Endothelial cell of umbilical vein (primary cell): ENCODE measurements at regions of chr4 and their contacts with region 1.

Region 1: DNA sequence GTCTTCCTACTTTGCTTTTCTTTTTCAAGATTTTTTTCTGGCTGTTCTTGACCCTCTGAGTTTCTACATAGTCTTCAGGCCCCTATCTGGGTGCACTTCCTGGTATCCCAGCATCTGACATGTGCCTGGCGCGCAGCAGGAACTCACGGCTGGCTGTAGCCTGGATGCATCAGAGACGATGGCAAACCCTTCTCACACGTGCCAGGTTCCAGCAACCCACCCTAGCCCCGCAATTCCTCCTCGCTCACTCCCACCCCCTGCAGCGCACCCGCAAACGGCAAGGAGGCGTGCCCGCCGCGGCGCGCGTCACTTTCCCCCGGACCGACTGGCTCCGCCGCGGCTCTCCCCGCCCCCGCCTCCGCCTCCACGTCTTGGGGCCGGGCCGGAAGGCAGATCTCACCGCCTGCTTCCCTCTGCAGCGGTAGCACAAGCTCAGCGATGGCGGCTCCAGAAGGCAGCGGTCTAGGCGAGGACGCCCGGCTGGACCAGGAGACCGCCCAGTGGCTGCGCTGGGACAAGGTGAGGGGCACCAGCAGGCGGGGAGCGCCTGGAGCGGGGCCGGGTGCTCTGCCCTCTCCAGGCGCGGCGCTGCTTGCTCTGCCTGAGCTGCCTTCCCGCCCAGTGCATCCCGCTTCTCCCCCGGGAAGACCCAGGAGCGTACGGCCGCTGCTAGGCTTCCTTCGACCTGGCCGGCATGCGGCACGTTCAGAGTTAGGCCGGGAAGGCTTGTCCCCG is at the start of gene PGM2:
- DNase-seq: peak; percentile 91
- H3K4me3 ChIP-seq: peak within 1 kb of the TSS; percentile 45 to 96 (median 95)
- H3K27ac ChIP-seq: peak within 1 kb of the TSS; percentile 56
- H3K4me1 ChIP-seq: peaks cover 19% of the 10 kb centered on the region
- H3K27me3 ChIP-seq: no peaks in the 10 kb centered on the region
- CTCF ChIP-seq: peak in 1 of 2 donors; percentile 16
- POLR2A ChIP-seq: peak; percentile 87
- total RNA-seq, gene PGM2: 45.8 and 53.9 TPM in 2 replicates

Region 2: GRCh38 chr4:37837446-37837845 is 11.0 kb after region 1 on chr4:
- CTCF ChIA-PET with region 1: interaction called, 21 read pairs
- POLR2A ChIA-PET with region 1: interaction called, 14 read pairs
- dilution Hi-C with region 1: no loop called
- intact Hi-C with region 1: loop called (anchors 1 kb)
- DNase-seq: peak; percentile 90
- H3K4me3 ChIP-seq: peak overlapping the region in 1 of 3 experiments; percentile 4
- H3K27ac ChIP-seq: peak overlapping the region; percentile 87
- H3K4me1 ChIP-seq: peaks cover 37% of the 10 kb centered on the region
- H3K27me3 ChIP-seq: no peaks in the 10 kb centered on the region
- CTCF ChIP-seq: no peak
- POLR2A ChIP-seq: peak; percentile 20

Region 3: DNA sequence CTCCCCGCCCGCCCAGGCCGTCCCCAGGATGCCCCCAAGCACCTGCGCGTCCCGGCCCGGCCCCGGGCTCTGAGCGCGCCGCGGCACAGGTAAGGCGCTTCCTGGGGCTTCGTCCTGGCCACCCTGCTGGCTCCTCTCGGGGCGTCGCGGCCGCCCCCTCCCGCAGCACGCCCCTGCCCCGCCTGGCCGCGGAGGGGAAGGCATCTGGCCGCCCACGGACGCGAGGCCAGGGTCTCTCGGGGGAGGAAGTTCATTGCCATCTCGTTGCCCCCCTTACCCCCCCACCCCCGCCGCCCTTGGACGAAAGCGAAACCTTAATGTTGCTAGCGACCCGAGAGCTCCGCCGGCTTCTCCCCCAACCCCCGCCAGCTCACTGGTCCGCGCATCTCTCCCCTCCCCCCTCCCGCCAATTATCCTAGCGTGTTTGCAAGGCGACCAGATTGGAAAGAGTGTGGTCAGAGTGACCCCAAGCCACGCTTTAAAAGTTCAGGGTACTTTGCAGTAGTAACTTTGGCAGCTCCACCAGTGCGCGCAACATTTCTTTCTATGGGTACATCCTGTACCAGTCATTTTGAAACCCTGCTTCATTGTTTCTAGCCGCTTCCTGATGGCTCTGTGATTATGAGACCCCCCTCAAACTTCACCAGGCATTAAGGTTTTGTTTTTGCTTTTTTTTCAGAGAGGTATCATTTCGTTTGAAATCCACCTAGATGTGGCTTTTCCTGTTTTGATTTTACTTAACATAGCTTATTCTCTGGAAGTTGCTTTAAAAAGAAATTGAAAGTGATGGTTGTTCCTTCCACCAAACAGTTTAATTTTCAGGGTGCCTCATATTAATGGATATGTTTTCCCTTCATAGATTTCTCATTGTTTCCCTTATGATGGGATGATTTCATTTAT is 65.0 kb after region 1 on chr4:
- CTCF ChIA-PET with region 1: interaction called, 3 read pairs
- POLR2A ChIA-PET with region 1: no interaction called
- dilution Hi-C with region 1: no loop called
- intact Hi-C with region 1: loop called (anchors 2 kb)
- DNase-seq: peak; percentile 17
- H3K4me3 ChIP-seq: peak overlapping the region; percentile 44 to 64 (median 48)
- H3K27ac ChIP-seq: no peak overlapping the region
- H3K4me1 ChIP-seq: peaks cover 7% of the 10 kb centered on the region
- H3K27me3 ChIP-seq: peaks cover 30 to 35% of the 10 kb centered on the region in 2 experiments
- CTCF ChIP-seq: peak in 1 of 2 donors; percentile 15
- POLR2A ChIP-seq: no peak

Region 4: DNA sequence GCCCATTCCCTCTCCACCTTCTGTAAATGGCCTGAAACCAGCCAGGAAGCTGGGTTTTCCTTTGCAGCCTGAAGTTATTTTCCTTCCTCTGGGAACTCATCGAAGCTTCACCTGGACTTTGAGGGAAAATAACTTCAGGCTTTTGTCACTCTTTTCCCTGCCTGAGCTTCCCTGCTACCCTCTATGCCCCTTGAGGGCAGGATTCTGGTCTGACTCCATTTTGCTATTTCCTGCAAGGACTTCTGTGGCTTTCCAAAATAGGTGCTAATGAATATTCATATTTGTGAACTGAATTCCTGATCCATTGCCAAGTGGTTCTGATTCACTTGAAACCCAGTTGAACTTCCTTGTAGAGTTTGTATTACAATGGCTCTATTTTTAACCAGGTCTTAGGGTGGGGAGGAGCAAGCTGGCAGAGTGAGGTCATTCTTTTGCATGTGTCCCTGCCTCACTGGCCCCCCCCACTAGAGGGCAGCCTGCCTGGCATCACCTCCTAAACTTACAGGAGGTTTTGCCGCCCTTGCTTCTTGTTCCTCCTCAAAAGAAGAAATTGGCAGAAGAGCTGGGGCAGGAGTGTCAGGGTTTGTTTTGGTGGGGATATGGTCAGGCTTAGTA is 144.1 kb after region 1 on chr4:
- CTCF ChIA-PET with region 1: no interaction called
- POLR2A ChIA-PET with region 1: no interaction called
- dilution Hi-C with region 1: no loop called
- intact Hi-C with region 1: no loop called
- DNase-seq: peak; percentile 49
- H3K4me3 ChIP-seq: no peak overlapping the region
- H3K27ac ChIP-seq: no peak overlapping the region
- H3K4me1 ChIP-seq: no peaks in the 10 kb centered on the region
- H3K27me3 ChIP-seq: no peaks in the 10 kb centered on the region
- CTCF ChIP-seq: peak; percentile 45 to 46
- POLR2A ChIP-seq: no peak